ENCODE measurements at regions of chr20 and their contacts with region 1.

Region 1: GRCh38 chr20:52083627-52084232 is 107.8 kb downstream of the ZFP64 start:
- DNase-seq: peak in 1 of 2 donors; percentile 44
- H3K4me3 ChIP-seq: no peak overlapping the region
- H3K27ac ChIP-seq: no peak overlapping the region
- H3K4me1 ChIP-seq: no peaks in the 10 kb centered on the region
- H3K27me3 ChIP-seq: no peaks in the 10 kb centered on the region
- CTCF ChIP-seq: peak; percentile 46 to 54

Region 2: GRCh38 chr20:51643390-51643789 is 440.3 kb before region 1 on chr20:
- intact Hi-C with region 1: loop called (anchors 5 kb)
- DNase-seq: no peak
- H3K4me3 ChIP-seq: no peak overlapping the region
- H3K27ac ChIP-seq: no peak overlapping the region
- H3K4me1 ChIP-seq: no peaks in the 10 kb centered on the region
- H3K27me3 ChIP-seq: no peaks in the 10 kb centered on the region
- CTCF ChIP-seq: no peak

Region 3: GRCh38 chr20:52031563-52032303 is 52.0 kb before region 1 on chr20:
- intact Hi-C with region 1: no loop called
- DNase-seq: no peak
- H3K4me3 ChIP-seq: no peak overlapping the region
- H3K27ac ChIP-seq: no peak overlapping the region
- H3K4me1 ChIP-seq: peaks cover 0 to 10% (median 4%) of the 10 kb centered on the region in 4 donors
- H3K27me3 ChIP-seq: no peaks in the 10 kb centered on the region
- CTCF ChIP-seq: no peak